ENCODE measurements at regions of chr18 and their contacts with region 1.

Region 1: DNA sequence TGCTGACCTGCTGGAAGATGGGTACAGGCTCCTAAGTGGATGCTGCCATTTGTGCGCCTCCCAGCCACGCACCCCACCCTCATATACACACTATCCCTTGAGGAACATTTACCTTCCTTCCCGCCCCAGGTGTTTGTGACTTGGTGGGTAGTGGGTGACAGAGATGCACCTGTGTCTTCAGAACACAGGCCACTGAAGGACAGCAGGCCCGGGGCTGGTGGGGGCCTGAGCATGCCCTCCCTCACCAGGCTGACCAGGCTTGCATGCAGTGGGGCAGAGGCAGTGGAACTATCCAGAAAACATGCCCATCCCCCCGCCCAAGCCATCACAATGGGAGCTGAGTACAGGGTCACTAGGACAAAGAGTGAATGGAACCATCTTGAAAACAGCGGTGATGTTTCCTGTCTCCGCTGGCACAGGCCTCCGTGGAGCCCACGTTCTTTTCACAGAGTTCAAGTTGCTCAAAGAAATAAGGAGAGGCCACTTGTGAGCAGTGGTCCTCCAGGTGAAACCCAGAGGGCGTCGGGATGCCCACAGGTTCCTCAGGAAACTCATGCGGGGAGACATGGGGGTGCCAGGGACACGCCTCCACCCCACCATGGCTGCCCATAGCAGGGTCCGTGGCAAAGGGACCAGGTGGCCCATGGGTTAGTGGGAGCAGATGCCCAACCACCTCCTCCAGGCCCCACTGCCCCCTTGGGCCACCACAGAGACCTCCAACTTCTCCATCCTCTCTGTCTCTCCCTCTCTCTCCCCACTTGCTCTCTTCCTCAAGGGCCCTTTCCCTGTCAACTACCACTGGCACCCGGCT is 90.9 kb downstream of the MALT1 start:
- DNase-seq: no peak
- ATAC-seq: no peak
- H3K4me3 ChIP-seq: no peak overlapping the region
- H3K27ac ChIP-seq: no peak overlapping the region
- H3K4me1 ChIP-seq: no peaks in the 10 kb centered on the region
- H3K27me3 ChIP-seq: no peaks in the 10 kb centered on the region
- CTCF ChIP-seq: no peak
- POLR2A ChIP-seq: no peak
- RAD21 ChIP-seq: no peak

Region 2: GRCh38 chr18:58529714-58530354 is 232.3 kb before region 1 on chr18:
- CTCF ChIA-PET with region 1: interaction called, 138 read pairs
- POLR2A ChIA-PET with region 1: interaction called, 5 read pairs
- RAD21 ChIA-PET with region 1: interaction called, 5 to 16 read pairs
- intact Hi-C with region 1: loop called (anchors 1 kb)
- DNase-seq: peak; percentile 35
- ATAC-seq: peak; percentile 93
- H3K4me3 ChIP-seq: no peak overlapping the region
- H3K27ac ChIP-seq: no peak overlapping the region
- H3K4me1 ChIP-seq: no peaks in the 10 kb centered on the region
- H3K27me3 ChIP-seq: no peaks in the 10 kb centered on the region
- CTCF ChIP-seq: peak; percentile 76 to 93 (median 88); a peak in 5 of 6 replicates
- POLR2A ChIP-seq: no peak
- RAD21 ChIP-seq: peak; percentile 96

Measured in HCT116 (cell line).